Breast epithelium (tissue), 4 donors: ENCODE measurements at regions of chr5 and their contacts with region 1.

Region 1: GRCh38 chr5:139787568-139788293 is 7.9 kb upstream of the PSD2 start:
- DNase-seq: peak; percentile 82 to 88
- H3K4me3 ChIP-seq: peak overlapping the region; percentile 54 to 74 (median 61)
- H3K27ac ChIP-seq: peak overlapping the region; percentile 69 to 84
- H3K4me1 ChIP-seq: no peaks in the 10 kb centered on the region
- H3K27me3 ChIP-seq: no peaks in the 10 kb centered on the region
- CTCF ChIP-seq: peak; percentile 98 to 99 (median 98)
- POLR2A ChIP-seq: no peak

Region 2: GRCh38 chr5:139844472-139845145 is 56.9 kb after region 1 on chr5:
- intact Hi-C with region 1: loop called (anchors 5 kb)
- DNase-seq: peak in 1 of 2 donors; percentile 66
- H3K4me3 ChIP-seq: no peak overlapping the region
- H3K27ac ChIP-seq: peak overlapping the region in 1 of 2 donors; percentile 0
- H3K4me1 ChIP-seq: no peaks in the 10 kb centered on the region
- H3K27me3 ChIP-seq: no peaks in the 10 kb centered on the region
- CTCF ChIP-seq: peak; percentile 19 to 62 (median 53)
- POLR2A ChIP-seq: no peak

Region 3: GRCh38 chr5:140157032-140157803 is 369.5 kb after region 1 on chr5:
- intact Hi-C with region 1: loop called (anchors 10 kb)
- DNase-seq: peak; percentile 81 to 85
- H3K4me3 ChIP-seq: peak overlapping the region; percentile 31 to 60 (median 47)
- H3K27ac ChIP-seq: peak overlapping the region; percentile 55 to 56
- H3K4me1 ChIP-seq: peaks cover 0 to 6% of the 10 kb centered on the region in 2 donors
- H3K27me3 ChIP-seq: no peaks in the 10 kb centered on the region
- CTCF ChIP-seq: peak; percentile 88 to 96 (median 95)
- POLR2A ChIP-seq: no peak